Motor neuron (in vitro differentiated cells): ENCODE measurements at regions of chr17 and their contacts with region 1.

Region 1: GRCh38 chr17:61635913-61636432 is 45.0 kb upstream of the NACA2 start:
- ATAC-seq: peak in 3 of 8 experiments; percentile 40 to 69 (median 52)
- H3K4me3 ChIP-seq: no peak overlapping the region
- H3K27ac ChIP-seq: no peak overlapping the region
- H3K4me1 ChIP-seq: no peaks in the 10 kb centered on the region

Region 2: DNA sequence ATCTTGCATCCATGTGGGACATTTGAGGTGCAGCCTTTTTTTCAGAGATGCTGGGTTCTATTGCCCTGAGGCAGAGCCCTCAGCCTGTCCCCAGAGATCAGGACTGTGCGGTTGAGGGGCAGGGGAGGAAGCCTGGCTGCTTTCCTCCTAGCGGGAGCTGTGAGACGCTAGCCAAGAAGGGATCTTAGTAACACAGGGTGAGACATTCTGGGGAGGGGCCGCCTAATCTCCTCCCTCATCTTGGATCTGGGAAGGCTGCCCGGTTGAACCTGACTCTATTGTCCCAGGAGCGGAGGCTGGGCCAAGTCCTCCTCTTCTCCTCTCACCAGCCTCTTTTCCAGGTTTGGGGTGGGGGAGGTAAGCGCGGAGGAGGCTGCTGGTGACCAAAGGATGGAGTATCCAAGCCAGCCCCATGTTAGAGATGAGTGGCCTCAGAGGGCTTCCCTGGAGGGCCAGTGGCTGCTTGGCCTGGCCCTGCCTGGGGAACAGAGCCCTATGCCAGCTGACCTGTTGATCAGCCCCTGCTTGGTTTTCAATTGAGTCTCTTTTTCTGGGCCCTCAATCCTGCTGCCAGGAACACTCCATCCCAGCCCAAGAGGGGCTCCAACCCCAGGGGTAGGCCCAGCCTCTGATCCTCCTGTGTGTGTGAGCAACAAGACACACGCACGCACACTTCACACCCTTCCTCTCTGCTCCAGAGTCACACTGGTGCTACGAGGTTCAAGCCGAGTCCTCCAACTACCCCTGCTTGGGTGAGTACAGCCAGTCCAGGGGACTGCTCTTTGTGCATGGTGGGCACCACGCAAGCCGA is 1481.2 kb before region 1 on chr17:
- in situ Hi-C with region 1: no loop called
- ATAC-seq: peak in 4 of 8 experiments; percentile 36 to 68 (median 41)
- H3K4me3 ChIP-seq: no peak overlapping the region
- H3K27ac ChIP-seq: no peak overlapping the region
- H3K4me1 ChIP-seq: peaks cover 31 to 35% of the 10 kb centered on the region in 2 donors

Region 3: GRCh38 chr17:61837175-61838051 is 201.4 kb after region 1 on chr17:
- in situ Hi-C with region 1: loop called in 3 of 9 experiments (anchors 5 to 10 kb)
- ATAC-seq: peak; percentile 47 to 86 (median 60)
- H3K4me3 ChIP-seq: no peak overlapping the region
- H3K27ac ChIP-seq: no peak overlapping the region
- H3K4me1 ChIP-seq: no peaks in the 10 kb centered on the region